ENCODE measurements at regions of chr7 and their contacts with region 1.

Region 1: GRCh38 chr7:64902806-64903721 is at the start of gene ZNF273:
- DNase-seq: peak; percentile 82 to 94 (median 89)
- ATAC-seq: peak; percentile 100
- H3K4me3 ChIP-seq: peak within 1 kb of the TSS; percentile 71 to 98
- H3K4me3 Mint-ChIP-seq: peak within 1 kb of the TSS; percentile 97
- H3K27ac ChIP-seq: peak within 1 kb of the TSS; percentile 53 to 86
- H3K27ac Mint-ChIP-seq: peak within 1 kb of the TSS; percentile 96
- H3K4me1 ChIP-seq: peaks cover 30% of the 10 kb centered on the region
- H3K4me1 Mint-ChIP-seq: peaks cover 48% of the 10 kb centered on the region
- H3K27me3 ChIP-seq: no peaks in the 10 kb centered on the region
- H3K27me3 Mint-ChIP-seq: no peaks in the 10 kb centered on the region
- CTCF ChIP-seq: no peak
- total RNA-seq, gene ZNF273: 8.7 to 9.9 TPM

Region 2: GRCh38 chr7:63900394-63901203 is 1002.5 kb before region 1 on chr7:
- CTCF ChIA-PET with region 1: no interaction called
- POLR2A ChIA-PET with region 1: no interaction called
- intact Hi-C with region 1: loop called in 1 of 2 experiments (anchors 10 kb)
- DNase-seq: peak; percentile 82 to 94 (median 88)
- ATAC-seq: peak; percentile 93
- H3K4me3 ChIP-seq: peak overlapping the region; percentile 67 to 98
- H3K4me3 Mint-ChIP-seq: peak overlapping the region; percentile 92
- H3K27ac ChIP-seq: peak overlapping the region; percentile 83 to 96
- H3K27ac Mint-ChIP-seq: peak overlapping the region; percentile 93
- H3K4me1 ChIP-seq: peaks cover 4% of the 10 kb centered on the region
- H3K4me1 Mint-ChIP-seq: peaks cover 6% of the 10 kb centered on the region
- H3K27me3 ChIP-seq: no peaks in the 10 kb centered on the region
- H3K27me3 Mint-ChIP-seq: no peaks in the 10 kb centered on the region
- CTCF ChIP-seq: no peak

Region 3: DNA sequence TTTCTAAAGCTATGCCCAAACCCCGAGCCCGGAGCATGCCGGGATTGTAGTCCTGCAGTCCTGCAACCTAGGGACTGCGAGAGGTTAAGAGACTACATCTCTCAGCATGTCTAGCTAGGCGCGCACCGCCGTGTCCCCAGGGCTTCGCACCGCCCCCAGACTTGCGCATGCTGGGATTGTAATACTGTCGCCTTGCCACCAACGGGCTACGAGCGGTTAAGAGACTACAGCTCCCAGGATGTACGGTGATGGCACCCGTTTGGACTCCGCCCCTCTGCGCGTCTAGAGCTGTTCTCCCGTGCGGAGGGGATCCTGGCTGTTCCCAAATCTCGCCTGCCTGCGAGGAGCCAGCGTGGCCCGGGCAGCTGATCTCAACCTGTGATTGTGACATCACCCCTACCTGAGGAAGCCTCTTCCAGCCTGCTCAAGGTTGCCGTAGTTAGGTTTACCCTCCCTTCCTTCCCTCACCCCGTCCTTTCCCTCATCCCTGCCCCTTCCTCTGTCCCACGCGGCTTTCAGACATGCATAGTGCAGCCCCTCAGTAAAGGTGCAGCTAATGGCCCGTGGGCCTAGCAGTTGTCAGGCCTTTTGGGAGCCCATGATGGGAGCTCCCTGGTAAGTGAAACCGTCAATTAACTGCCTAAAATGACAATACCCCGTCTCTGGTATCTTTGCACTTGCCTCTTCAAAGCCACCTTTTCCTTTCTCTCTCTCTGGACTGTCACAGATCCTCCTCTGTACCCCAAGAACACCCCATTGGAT is 595.6 kb before region 1 on chr7:
- CTCF ChIA-PET with region 1: no interaction called
- POLR2A ChIA-PET with region 1: no interaction called
- intact Hi-C with region 1: loop called (anchors 2 to 5 kb)
- DNase-seq: peak; percentile 88 to 97 (median 94)
- ATAC-seq: peak; percentile 98
- H3K4me3 ChIP-seq: peak overlapping the region; percentile 71 to 80
- H3K4me3 Mint-ChIP-seq: peak overlapping the region; percentile 95
- H3K27ac ChIP-seq: peak overlapping the region; percentile 77 to 91
- H3K27ac Mint-ChIP-seq: peak overlapping the region; percentile 99
- H3K4me1 ChIP-seq: peaks cover 14% of the 10 kb centered on the region
- H3K4me1 Mint-ChIP-seq: peaks cover 14% of the 10 kb centered on the region
- H3K27me3 ChIP-seq: no peaks in the 10 kb centered on the region
- H3K27me3 Mint-ChIP-seq: no peaks in the 10 kb centered on the region
- CTCF ChIP-seq: no peak

Region 4: DNA sequence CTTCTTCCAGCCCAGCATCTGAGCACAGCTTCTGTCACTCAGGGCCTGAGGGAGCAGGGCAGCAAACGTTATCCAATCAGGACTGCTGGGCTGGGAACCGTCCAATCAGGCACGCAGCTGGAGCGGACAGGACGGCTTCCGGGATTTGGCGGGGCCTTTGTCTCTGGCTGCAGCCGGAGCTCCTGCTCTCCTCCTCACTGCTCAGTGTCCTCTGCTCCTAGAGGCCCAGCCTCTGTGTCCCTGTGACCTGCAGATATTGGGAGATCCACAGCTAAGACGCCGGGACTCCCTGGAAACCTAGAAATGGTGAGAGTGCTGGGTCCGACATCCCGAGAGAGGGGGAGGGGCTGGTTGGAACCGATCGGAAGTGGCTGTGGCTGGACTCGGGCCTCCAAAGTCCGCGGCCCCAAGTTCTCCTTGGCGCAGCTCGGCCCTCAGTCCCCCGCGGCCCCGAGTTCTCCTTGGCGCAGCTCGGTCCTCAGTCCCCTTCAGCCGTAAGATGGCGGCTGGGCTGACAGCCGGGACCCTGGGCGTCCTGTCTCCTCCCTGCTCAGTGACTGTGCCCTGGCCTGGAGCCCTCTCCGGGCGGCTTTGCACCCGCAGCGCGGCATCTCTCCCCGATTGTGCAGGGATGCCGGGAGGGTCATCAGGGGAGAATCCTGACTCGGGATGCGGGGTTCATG is 236.9 kb before region 1 on chr7 and contains the start of gene ZNF107:
- CTCF ChIA-PET with region 1: interaction called, 4 read pairs
- POLR2A ChIA-PET with region 1: interaction called, 10 read pairs
- intact Hi-C with region 1: loop called (anchors 2 kb)
- DNase-seq: peak; percentile 73 to 94 (median 86)
- ATAC-seq: peak; percentile 95
- H3K4me3 ChIP-seq: peak within 1 kb of the TSS; percentile 93 to 95
- H3K4me3 Mint-ChIP-seq: peak within 1 kb of the TSS; percentile 96
- H3K27ac ChIP-seq: peak within 1 kb of the TSS; percentile 92 to 93
- H3K27ac Mint-ChIP-seq: peak within 1 kb of the TSS; percentile 96
- H3K4me1 ChIP-seq: peaks cover 14% of the 10 kb centered on the region
- H3K4me1 Mint-ChIP-seq: peaks cover 64% of the 10 kb centered on the region
- H3K27me3 ChIP-seq: no peaks in the 10 kb centered on the region
- H3K27me3 Mint-ChIP-seq: no peaks in the 10 kb centered on the region
- CTCF ChIP-seq: no peak
- total RNA-seq, gene ZNF107: 14.0 to 14.7 TPM

Region 5: DNA sequence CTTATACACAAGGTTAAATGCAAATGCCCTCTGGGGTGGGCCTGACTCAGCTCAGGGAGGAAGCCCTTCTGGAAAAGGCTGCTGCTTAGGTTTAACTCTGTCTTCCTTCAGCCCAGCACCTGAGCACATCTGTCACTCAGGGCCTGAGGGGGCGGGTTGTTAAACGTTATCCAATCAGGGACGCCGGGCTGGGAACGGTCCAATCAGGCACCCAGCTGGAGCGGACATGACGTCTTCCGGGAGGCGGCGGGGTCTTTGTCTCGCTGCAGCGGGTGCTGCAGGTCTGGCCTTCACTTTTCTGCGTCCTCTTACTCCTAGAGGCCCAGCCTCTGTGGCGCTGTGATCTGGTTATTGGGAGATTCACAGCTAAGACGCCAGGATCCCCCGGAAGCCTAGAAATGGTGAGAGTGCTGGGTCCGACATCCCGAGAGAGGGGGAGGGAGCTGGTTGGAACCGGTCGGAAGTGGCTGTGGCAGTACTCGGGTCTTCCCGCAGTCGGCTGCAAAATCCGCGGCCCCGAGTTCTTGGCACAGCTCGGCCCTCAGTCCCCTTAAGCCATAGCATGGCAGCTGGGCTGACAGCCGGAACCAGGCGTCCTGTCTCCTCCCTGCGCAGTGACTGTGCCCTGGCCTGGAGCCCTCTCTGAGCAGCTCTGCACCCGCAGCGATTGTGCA is 108.8 kb before region 1 on chr7 and contains the start of gene ZNF138:
- CTCF ChIA-PET with region 1: no interaction called
- POLR2A ChIA-PET with region 1: interaction called, 11 read pairs
- intact Hi-C with region 1: loop called (anchors 2 kb)
- DNase-seq: peak; percentile 88 to 96 (median 94)
- ATAC-seq: peak; percentile 98
- H3K4me3 ChIP-seq: peak within 1 kb of the TSS; percentile 75 to 79
- H3K4me3 Mint-ChIP-seq: peak within 1 kb of the TSS; percentile 99
- H3K27ac ChIP-seq: peak within 1 kb of the TSS; percentile 87 to 90
- H3K27ac Mint-ChIP-seq: peak within 1 kb of the TSS; percentile 98
- H3K4me1 ChIP-seq: peaks cover 21% of the 10 kb centered on the region
- H3K4me1 Mint-ChIP-seq: peaks cover 35% of the 10 kb centered on the region
- H3K27me3 ChIP-seq: no peaks in the 10 kb centered on the region
- H3K27me3 Mint-ChIP-seq: no peaks in the 10 kb centered on the region
- CTCF ChIP-seq: no peak
- total RNA-seq, gene ZNF138: 4.9 to 5.3 TPM

Region 6: GRCh38 chr7:65037740-65038678 is 134.9 kb after region 1 on chr7:
- CTCF ChIA-PET with region 1: no interaction called
- POLR2A ChIA-PET with region 1: interaction called, 3 read pairs
- intact Hi-C with region 1: loop called (anchors 2 kb)
- DNase-seq: peak; percentile 87 to 97 (median 94)
- ATAC-seq: peak; percentile 89
- H3K4me3 ChIP-seq: peak overlapping the region; percentile 52 to 69
- H3K4me3 Mint-ChIP-seq: peak overlapping the region; percentile 79
- H3K27ac ChIP-seq: peak overlapping the region; percentile 62 to 74
- H3K27ac Mint-ChIP-seq: peak overlapping the region; percentile 80
- H3K4me1 ChIP-seq: peaks cover 11% of the 10 kb centered on the region
- H3K4me1 Mint-ChIP-seq: peaks cover 14% of the 10 kb centered on the region
- H3K27me3 ChIP-seq: no peaks in the 10 kb centered on the region
- H3K27me3 Mint-ChIP-seq: no peaks in the 10 kb centered on the region
- CTCF ChIP-seq: peak; percentile 16

Region 7: GRCh38 chr7:66413379-66414114 is 1510.5 kb after region 1 on chr7:
- CTCF ChIA-PET with region 1: no interaction called
- POLR2A ChIA-PET with region 1: no interaction called
- intact Hi-C with region 1: loop called in 1 of 2 experiments (anchors 5 kb)
- DNase-seq: peak; percentile 62 to 91 (median 85)
- ATAC-seq: peak; percentile 86
- H3K4me3 ChIP-seq: peak overlapping the region; percentile 56 to 62
- H3K4me3 Mint-ChIP-seq: peak overlapping the region; percentile 80
- H3K27ac ChIP-seq: peak overlapping the region; percentile 39 to 43
- H3K27ac Mint-ChIP-seq: peak overlapping the region; percentile 87
- H3K4me1 ChIP-seq: peaks cover 15% of the 10 kb centered on the region
- H3K4me1 Mint-ChIP-seq: peaks cover 12% of the 10 kb centered on the region
- H3K27me3 ChIP-seq: no peaks in the 10 kb centered on the region
- H3K27me3 Mint-ChIP-seq: no peaks in the 10 kb centered on the region
- CTCF ChIP-seq: peak; percentile 50